HepG2 (cell line): ENCODE measurements at regions of chr1 and their contacts with region 1.

Region 1: DNA sequence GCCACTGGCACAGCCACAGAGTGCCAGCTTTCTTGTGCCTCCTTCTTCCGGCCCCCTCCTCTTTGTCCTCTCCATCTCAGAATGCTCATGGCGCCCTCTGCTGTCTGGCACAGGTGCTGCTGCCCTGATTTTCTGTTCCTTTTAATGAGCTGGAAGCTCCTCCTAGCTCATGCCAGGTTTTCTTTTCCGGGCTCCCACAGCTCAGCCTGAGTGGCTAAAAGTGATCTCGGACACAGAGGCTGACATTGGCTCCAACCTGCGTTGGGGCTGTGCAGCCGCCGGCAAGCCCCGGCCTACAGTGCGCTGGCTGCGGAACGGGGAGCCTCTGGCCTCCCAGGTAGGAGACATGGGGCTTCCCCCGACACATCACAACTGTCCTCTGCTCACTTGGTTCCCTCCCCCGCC is 18.7 kb downstream of the CNTN2 start:
- DNase-seq: peak; percentile 49
- ATAC-seq: peak; percentile 68
- H3K4me3 ChIP-seq: no peak overlapping the region
- H3K27ac ChIP-seq: no peak overlapping the region
- H3K4me1 ChIP-seq: no peaks in the 10 kb centered on the region
- H3K27me3 ChIP-seq: peaks cover 1 to 43% of the 10 kb centered on the region in 2 experiments; a peak in 3 of 5 replicates
- CTCF ChIP-seq: peak; percentile 87
- EP300 ChIP-seq: no peak
- POLR2A ChIP-seq: no peak
- RAD21 ChIP-seq: peak; percentile 77

Region 2: DNA sequence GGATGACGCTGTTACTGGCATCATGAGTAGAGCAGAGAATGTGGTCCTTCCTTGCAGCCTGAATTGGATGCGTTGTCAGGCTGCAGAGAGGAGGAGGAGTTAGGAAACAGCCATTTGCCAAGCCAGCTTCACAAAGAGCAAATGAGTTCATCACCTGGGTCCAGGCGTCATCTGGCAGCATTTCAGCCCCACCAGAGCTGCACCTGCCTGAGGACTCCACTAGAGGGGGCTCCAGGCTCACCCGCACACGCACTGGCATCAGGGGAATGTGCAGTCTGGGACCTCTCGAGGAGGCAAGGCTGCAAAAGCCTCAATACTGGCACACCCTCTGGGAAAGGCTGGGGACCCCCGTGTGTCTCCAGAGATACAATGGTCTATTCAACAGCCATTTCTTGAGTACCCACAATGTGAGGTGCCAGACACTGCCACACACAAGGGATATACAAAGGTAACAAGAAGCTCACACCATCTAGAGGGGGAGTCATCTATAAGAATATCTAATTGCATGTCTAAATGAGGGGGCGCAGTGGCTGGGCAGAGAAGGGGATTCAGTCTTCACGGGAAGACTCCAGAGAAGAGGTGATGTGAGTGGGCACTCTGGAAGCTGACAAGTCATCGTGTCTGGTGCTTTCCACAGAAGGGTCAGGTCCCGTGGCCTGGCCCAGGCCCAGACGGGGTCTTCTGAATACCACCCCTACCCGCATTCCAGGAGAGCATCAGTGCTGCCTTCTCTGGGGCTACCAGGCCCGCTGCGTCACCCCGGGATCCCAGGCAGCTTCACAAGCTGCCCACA is 72.2 kb before region 1 on chr1:
- CTCF ChIA-PET with region 1: interaction called, 41 read pairs
- POLR2A ChIA-PET with region 1: no interaction called
- in situ Hi-C with region 1: no loop called
- intact Hi-C with region 1: loop called (anchors 1 kb)
- DNase-seq: peak; percentile 46
- ATAC-seq: peak; percentile 86
- H3K4me3 ChIP-seq: no peak overlapping the region
- H3K27ac ChIP-seq: no peak overlapping the region
- H3K4me1 ChIP-seq: peaks cover 4% of the 10 kb centered on the region; the same call in 1 of the 2 replicates
- H3K27me3 ChIP-seq: peaks cover 14 to 70% of the 10 kb centered on the region in 2 experiments
- CTCF ChIP-seq: peak; percentile 95
- EP300 ChIP-seq: no peak
- POLR2A ChIP-seq: no peak
- RAD21 ChIP-seq: peak; percentile 91

Region 3: DNA sequence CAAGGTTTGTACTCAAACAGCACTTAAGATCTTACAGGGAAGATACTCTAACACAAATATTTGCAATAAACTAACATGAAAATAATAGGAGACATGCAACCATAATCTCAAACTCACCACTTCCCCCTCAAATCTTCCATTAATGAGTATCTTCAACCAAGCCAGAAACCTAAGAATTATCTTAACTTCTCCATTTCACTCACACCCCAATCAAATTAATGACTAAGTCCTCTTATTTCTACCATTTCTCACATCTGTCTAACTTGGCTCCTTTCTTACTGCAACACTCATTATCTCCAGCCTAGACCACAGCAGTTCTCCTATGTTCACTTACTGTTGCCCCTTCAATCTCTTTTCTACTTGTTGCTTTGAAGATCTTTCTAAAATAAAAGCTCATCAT is 49.7 kb after region 1 on chr1:
- CTCF ChIA-PET with region 1: no interaction called
- POLR2A ChIA-PET with region 1: no interaction called
- in situ Hi-C with region 1: no loop called
- intact Hi-C with region 1: no loop called
- DNase-seq: no peak
- ATAC-seq: no peak
- H3K4me3 ChIP-seq: no peak overlapping the region
- H3K27ac ChIP-seq: no peak overlapping the region
- H3K4me1 ChIP-seq: no peaks in the 10 kb centered on the region
- H3K27me3 ChIP-seq: no peaks in the 10 kb centered on the region
- CTCF ChIP-seq: no peak
- EP300 ChIP-seq: no peak
- POLR2A ChIP-seq: no peak
- RAD21 ChIP-seq: no peak